CD8-positive, alpha-beta memory T cell (primary cell): ENCODE measurements at regions of chr6 and their contacts with region 1.

Region 1: DNA sequence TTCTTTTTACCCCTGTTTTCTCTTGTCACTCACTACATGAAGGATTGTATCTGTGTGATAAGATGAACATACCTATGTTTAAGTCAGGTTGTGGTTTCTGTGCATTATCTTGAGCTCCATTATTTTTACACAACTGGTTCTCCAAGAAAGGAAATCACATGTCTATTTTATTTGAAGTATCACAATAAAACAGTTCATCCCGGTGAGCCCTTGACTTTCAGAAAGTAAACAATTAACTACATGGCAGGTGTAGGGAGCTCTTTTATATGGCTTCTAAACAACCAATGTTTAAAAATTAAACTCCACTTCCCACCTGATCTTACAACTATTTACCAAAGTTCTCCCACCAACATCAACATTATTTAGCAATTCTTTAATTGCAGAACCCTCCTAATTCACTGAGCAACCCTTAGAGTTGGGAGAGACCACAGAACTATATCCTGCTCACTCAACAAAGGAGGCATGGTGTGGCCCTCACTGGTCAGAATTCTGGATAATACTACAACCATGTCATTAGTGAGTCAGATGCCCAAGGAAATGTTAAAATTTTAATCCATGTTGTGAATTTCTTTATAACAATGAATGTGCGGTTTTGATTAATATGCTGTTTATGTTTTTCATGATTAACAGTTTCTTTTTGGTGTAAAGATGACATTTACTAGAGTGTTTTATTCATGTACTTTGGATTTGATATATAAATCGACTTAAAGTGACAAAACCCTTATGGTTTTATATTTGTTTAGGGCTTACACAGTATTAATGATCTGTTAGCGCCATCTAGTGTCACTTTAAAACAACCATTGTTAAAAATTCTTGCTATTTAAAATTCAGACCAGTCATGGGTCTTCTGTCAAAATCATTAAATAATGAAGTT is 50.0 kb upstream of the SCGN start:
- DNase-seq: peak in 2 of 5 donors; percentile 7 to 17
- H3K4me3 ChIP-seq: no peak overlapping the region
- H3K4me3 Mint-ChIP-seq: no peak overlapping the region
- H3K27ac ChIP-seq: no peak overlapping the region
- H3K27ac Mint-ChIP-seq: no peak overlapping the region
- H3K4me1 ChIP-seq: no peaks in the 10 kb centered on the region
- H3K4me1 Mint-ChIP-seq: no peaks in the 10 kb centered on the region
- H3K27me3 ChIP-seq: no peaks in the 10 kb centered on the region
- H3K27me3 Mint-ChIP-seq: peaks cover 0 to 9% of the 10 kb centered on the region in 2 donors

Region 2: DNA sequence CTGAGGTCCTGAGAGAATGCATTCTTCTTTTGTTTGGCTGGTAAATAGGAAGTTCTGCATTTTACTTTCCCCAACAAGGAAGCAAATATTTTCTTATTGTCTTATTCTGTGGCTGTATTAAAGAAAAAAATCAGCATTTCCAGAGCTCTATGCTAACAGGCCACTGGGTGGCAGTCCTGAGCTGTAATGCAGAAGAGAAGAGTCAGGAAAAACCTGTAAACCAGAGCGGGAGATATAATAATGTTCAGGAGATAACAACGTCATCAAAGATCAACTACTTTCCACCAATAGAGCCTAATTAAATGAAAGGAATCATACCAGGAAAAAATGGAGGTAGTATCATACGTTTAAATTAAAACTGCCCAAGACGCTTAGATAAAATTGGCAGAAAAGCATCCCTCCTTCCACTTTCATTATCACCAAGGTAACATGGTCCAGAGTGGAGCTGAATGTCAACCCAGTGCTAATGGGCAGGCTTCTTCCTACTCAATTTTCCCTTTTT is 378.5 kb before region 1 on chr6:
- CTCF ChIA-PET with region 1: interaction called, 11 read pairs
- POLR2A ChIA-PET with region 1: no interaction called
- DNase-seq: peak; percentile 30 to 65 (median 37)
- H3K4me3 ChIP-seq: no peak overlapping the region
- H3K4me3 Mint-ChIP-seq: peak overlapping the region in 6 of 7 donors; percentile 23 to 78 (median 74)
- H3K27ac ChIP-seq: no peak overlapping the region
- H3K27ac Mint-ChIP-seq: no peak overlapping the region
- H3K4me1 ChIP-seq: no peaks in the 10 kb centered on the region
- H3K4me1 Mint-ChIP-seq: peaks cover 9 to 12% (median 11%) of the 10 kb centered on the region in 3 donors
- H3K27me3 ChIP-seq: no peaks in the 10 kb centered on the region
- H3K27me3 Mint-ChIP-seq: peaks cover 9 to 12% of the 10 kb centered on the region in 2 donors